Naive thymus-derived CD4-positive, alpha-beta T cell (primary cell): ENCODE measurements at regions of chr4 and their contacts with region 1.

Region 1: DNA sequence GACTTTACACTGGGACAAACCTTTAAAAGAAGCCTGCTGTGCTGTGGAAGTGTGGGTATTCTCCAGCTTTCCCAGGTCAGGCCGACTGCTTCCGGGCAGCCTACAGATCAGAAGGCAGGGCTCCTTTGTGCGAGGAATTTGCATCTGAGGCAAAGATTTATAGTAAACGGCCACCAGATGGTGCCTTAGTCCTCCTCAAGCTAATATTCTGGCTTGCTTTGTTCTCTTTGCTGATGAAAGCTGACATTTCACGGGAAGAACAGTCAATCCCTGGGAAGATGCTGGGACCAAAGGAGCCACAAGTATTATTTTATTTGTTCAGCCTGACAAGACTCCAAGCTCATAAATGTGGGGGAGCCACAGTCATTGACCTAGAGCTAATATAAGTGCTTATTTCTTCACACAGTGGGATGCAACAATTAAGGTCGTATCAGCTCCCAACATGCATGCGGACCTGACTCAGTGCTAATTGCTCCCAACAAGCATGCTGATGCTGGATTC is 120.7 kb upstream of the TRIM2 start:
- DNase-seq: peak in 7 of 9 donors; percentile 44 to 66 (median 57)
- ATAC-seq: peak; percentile 61
- H3K4me3 ChIP-seq: no peak overlapping the region
- H3K4me3 Mint-ChIP-seq: peak overlapping the region in 3 of 10 donors; percentile 16 to 71 (median 36)
- H3K27ac ChIP-seq: no peak overlapping the region
- H3K27ac Mint-ChIP-seq: peak overlapping the region in 6 of 9 donors; percentile 45 to 83 (median 60)
- H3K4me1 ChIP-seq: peaks cover 5 to 33% of the 10 kb centered on the region in 2 donors
- H3K4me1 Mint-ChIP-seq: peaks cover 19 to 59% (median 49%) of the 10 kb centered on the region in 7 donors
- H3K27me3 ChIP-seq: no peaks in the 10 kb centered on the region
- H3K27me3 Mint-ChIP-seq: peaks cover 0 to 32% (median 0%) of the 10 kb centered on the region in 5 donors

Region 2: DNA sequence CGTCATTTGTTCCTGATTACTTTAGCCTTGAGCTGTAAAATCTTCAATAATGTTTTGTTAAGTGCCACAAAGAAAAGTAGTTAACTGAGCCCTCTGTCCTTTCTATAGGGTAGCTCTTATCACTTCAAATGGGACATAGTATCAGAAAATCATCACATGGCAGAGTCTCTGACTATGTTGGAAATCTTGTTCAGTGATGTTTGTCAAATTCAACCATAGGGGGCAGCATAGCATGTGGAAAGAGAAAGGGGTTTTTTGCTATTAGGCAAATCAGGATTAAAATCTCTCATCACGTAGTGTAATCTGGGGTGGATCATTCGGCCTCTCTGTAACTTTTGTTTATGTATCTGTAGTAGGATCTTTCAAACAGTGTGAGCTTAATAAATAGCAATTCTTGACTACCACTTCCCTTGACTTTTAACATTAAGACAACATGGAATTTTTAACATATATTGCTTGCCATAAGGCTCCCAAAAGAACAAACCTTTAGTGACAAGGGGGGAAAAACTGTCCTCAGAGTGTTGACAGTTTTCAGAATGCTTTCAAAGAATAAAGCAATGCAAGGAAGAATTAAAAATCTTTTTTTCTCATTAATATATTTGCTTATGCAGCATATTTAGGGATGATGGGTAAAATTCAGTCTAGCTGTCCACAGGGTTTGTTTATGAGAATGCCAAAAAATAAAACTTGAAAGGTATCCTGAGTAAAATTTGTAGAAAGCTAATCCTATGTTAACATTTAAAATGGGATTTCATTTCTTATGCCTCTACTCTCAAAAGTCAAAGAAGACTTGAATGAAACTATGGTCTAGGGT is 674.8 kb before region 1 on chr4:
- CTCF ChIA-PET with region 1: no interaction called
- POLR2A ChIA-PET with region 1: no interaction called
- intact Hi-C with region 1: loop called in 1 of 2 experiments (anchors 1 kb)
- DNase-seq: peak in 6 of 9 donors; percentile 7 to 29 (median 21)
- ATAC-seq: peak; percentile 77
- H3K4me3 ChIP-seq: no peak overlapping the region
- H3K4me3 Mint-ChIP-seq: no peak overlapping the region
- H3K27ac ChIP-seq: no peak overlapping the region
- H3K27ac Mint-ChIP-seq: no peak overlapping the region
- H3K4me1 ChIP-seq: no peaks in the 10 kb centered on the region
- H3K4me1 Mint-ChIP-seq: peaks cover 2 to 20% (median 11%) of the 10 kb centered on the region in 7 donors
- H3K27me3 ChIP-seq: no peaks in the 10 kb centered on the region
- H3K27me3 Mint-ChIP-seq: no peaks in the 10 kb centered on the region

Region 3: DNA sequence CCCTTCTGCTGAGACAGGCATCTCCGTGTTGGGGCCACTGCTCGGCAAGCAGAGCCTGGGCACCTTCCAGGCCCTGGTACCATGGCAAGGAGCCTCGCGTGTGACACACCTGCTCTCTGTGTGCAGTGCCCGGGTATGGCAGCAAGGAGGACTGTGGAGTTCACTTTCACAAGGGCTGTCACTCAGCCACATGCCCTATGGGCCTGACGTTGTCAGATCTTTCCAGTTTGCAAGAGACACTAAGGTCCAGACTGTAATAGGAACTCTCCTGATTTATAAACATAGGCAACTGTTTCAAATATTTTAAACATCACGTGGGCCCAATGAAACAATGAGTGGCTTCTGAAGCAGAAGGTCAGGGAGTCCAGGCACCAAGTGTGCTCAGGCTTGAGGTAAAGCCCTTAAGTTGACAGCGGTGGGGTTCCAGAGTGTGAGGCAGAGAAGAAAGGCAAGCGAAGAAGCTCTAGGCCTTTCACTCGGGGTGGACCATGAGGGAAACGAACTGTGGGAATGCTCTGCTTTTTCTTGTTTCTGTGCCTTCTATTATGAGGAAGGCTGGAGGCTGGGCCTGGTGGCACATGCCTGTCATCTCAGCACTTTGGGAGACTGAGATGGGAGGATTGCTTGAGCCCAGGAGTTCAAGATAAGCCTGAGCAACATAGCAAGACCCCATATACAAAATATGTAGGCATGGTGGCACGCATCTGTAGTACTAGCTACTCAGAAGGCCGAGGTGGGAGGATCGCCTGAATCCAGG is 12.1 kb after region 1 on chr4:
- CTCF ChIA-PET with region 1: interaction called, 13 read pairs
- POLR2A ChIA-PET with region 1: no interaction called
- intact Hi-C with region 1: no loop called
- DNase-seq: no peak
- ATAC-seq: no peak
- H3K4me3 ChIP-seq: no peak overlapping the region
- H3K4me3 Mint-ChIP-seq: no peak overlapping the region
- H3K27ac ChIP-seq: no peak overlapping the region
- H3K27ac Mint-ChIP-seq: peak overlapping the region in 4 of 9 donors; percentile 15 to 78 (median 62)
- H3K4me1 ChIP-seq: no peaks in the 10 kb centered on the region
- H3K4me1 Mint-ChIP-seq: peaks cover 0 to 5% (median 4%) of the 10 kb centered on the region in 7 donors
- H3K27me3 ChIP-seq: no peaks in the 10 kb centered on the region
- H3K27me3 Mint-ChIP-seq: peaks cover 0 to 7% (median 0%) of the 10 kb centered on the region in 5 donors

Region 4: GRCh38 chr4:153115322-153116290 is 32.1 kb after region 1 on chr4:
- CTCF ChIA-PET with region 1: interaction called, 95 read pairs
- POLR2A ChIA-PET with region 1: interaction called, 9 read pairs
- intact Hi-C with region 1: loop called in 1 of 2 experiments (anchors 1 kb)
- DNase-seq: peak in 8 of 9 donors; percentile 64 to 93 (median 89)
- ATAC-seq: peak; percentile 65
- H3K4me3 ChIP-seq: peak overlapping the region; percentile 46
- H3K4me3 Mint-ChIP-seq: peak overlapping the region in 2 of 10 donors; percentile 70 to 79
- H3K27ac ChIP-seq: peak overlapping the region; percentile 84
- H3K27ac Mint-ChIP-seq: no peak overlapping the region
- H3K4me1 ChIP-seq: peaks cover 43 to 62% of the 10 kb centered on the region in 2 donors
- H3K4me1 Mint-ChIP-seq: peaks cover 0 to 26% (median 11%) of the 10 kb centered on the region in 7 donors
- H3K27me3 ChIP-seq: no peaks in the 10 kb centered on the region
- H3K27me3 Mint-ChIP-seq: peaks cover 0 to 9% (median 0%) of the 10 kb centered on the region in 5 donors

Region 5: GRCh38 chr4:153127760-153128494 is 44.4 kb after region 1 on chr4:
- CTCF ChIA-PET with region 1: interaction called, 193 read pairs
- POLR2A ChIA-PET with region 1: interaction called, 15 read pairs
- intact Hi-C with region 1: loop called (anchors 1 kb)
- DNase-seq: peak; percentile 67 to 91 (median 81)
- ATAC-seq: peak; percentile 91
- H3K4me3 ChIP-seq: no peak overlapping the region
- H3K4me3 Mint-ChIP-seq: no peak overlapping the region
- H3K27ac ChIP-seq: no peak overlapping the region
- H3K27ac Mint-ChIP-seq: peak overlapping the region in 8 of 9 donors; percentile 25 to 91 (median 64)
- H3K4me1 ChIP-seq: no peaks in the 10 kb centered on the region
- H3K4me1 Mint-ChIP-seq: peaks cover 0 to 8% (median 5%) of the 10 kb centered on the region in 7 donors
- H3K27me3 ChIP-seq: no peaks in the 10 kb centered on the region
- H3K27me3 Mint-ChIP-seq: peaks cover 0 to 29% (median 0%) of the 10 kb centered on the region in 5 donors

Region 6: GRCh38 chr4:153318696-153319320 is 235.3 kb after region 1 on chr4:
- CTCF ChIA-PET with region 1: interaction called, 4 read pairs
- POLR2A ChIA-PET with region 1: no interaction called
- intact Hi-C with region 1: loop called (anchors 1 to 2 kb)
- DNase-seq: peak in 6 of 9 donors; percentile 11 to 56 (median 44)
- ATAC-seq: peak; percentile 54
- H3K4me3 ChIP-seq: no peak overlapping the region
- H3K4me3 Mint-ChIP-seq: no peak overlapping the region
- H3K27ac ChIP-seq: no peak overlapping the region
- H3K27ac Mint-ChIP-seq: no peak overlapping the region
- H3K4me1 ChIP-seq: no peaks in the 10 kb centered on the region
- H3K4me1 Mint-ChIP-seq: no peaks in the 10 kb centered on the region
- H3K27me3 ChIP-seq: no peaks in the 10 kb centered on the region
- H3K27me3 Mint-ChIP-seq: no peaks in the 10 kb centered on the region

Region 7: GRCh38 chr4:153750197-153750817 is 666.8 kb after region 1 on chr4:
- CTCF ChIA-PET with region 1: no interaction called
- POLR2A ChIA-PET with region 1: no interaction called
- intact Hi-C with region 1: loop called in 1 of 2 experiments (anchors 5 kb)
- DNase-seq: peak; percentile 37 to 78 (median 64)
- ATAC-seq: peak; percentile 82
- H3K4me3 ChIP-seq: no peak overlapping the region
- H3K4me3 Mint-ChIP-seq: no peak overlapping the region
- H3K27ac ChIP-seq: no peak overlapping the region
- H3K27ac Mint-ChIP-seq: peak overlapping the region in 2 of 9 donors; percentile 26 to 45
- H3K4me1 ChIP-seq: peaks cover 0 to 12% of the 10 kb centered on the region in 2 donors
- H3K4me1 Mint-ChIP-seq: peaks cover 4 to 31% (median 17%) of the 10 kb centered on the region in 7 donors
- H3K27me3 ChIP-seq: no peaks in the 10 kb centered on the region
- H3K27me3 Mint-ChIP-seq: peaks cover 0 to 32% (median 0%) of the 10 kb centered on the region in 5 donors